ENCODE measurements at regions of chr1 and their contacts with region 1.

Region 1: GRCh38 chr1:35030756-35031446 is 844 bp downstream of the ZMYM6 start:
- DNase-seq: peak; percentile 58
- H3K4me3 Mint-ChIP-seq: peak overlapping the region; percentile 99
- H3K27ac Mint-ChIP-seq: peak overlapping the region; percentile 96
- H3K4me1 Mint-ChIP-seq: peaks cover 29% of the 10 kb centered on the region
- H3K27me3 Mint-ChIP-seq: no peaks in the 10 kb centered on the region

Region 2: DNA sequence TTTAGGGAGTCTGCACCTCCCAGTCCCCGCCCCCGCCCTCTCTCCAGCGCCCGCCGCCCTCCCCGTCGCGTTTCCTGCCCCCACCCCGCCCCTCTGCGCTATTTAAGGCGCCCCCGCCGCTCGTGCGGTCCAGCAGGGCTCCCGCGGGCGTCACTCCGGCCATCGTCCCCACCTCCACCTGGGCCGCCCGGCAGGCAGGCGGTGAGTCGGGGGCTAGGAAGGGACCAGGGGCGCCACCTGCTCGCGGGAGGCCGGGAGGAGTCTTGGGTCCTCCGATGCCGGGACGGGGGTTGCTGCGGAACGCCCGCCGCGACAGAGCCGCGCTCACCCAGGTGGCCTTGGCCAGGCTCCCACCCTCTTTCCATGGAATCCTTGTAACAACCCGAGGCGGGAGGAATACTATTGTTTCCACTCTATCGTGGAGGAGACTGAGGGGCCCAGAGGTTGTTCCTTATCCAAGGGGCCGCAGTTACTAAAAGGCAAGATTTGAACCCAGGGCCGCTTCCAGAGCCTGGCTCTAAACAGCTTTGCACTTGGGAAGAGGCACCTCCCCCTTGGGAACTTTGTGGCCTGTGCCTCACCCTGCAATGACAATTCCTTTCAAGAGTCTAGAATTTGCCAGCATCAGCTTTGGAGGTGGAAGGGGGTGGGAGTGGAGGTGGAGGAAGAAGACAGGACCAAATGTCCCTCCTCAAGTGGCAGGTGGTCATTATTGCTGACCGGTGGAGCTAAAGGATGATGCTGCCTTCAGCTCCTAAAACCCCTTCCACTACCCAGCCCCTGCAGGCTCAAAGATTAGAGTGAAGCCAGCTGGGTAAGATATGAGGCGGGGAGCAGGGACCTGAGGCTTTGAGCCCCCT is 237.8 kb before region 1 on chr1 and contains the start of gene GJA4:
- CTCF ChIA-PET with region 1: no interaction called
- POLR2A ChIA-PET with region 1: no interaction called
- intact Hi-C with region 1: no loop called
- DNase-seq: no peak
- H3K4me3 Mint-ChIP-seq: no peak within 1 kb of the TSS
- H3K27ac Mint-ChIP-seq: no peak within 1 kb of the TSS
- H3K4me1 Mint-ChIP-seq: peaks cover 18% of the 10 kb centered on the region
- H3K27me3 Mint-ChIP-seq: peaks cover 37% of the 10 kb centered on the region
- total RNA-seq, gene GJA4: not detected

Region 3: DNA sequence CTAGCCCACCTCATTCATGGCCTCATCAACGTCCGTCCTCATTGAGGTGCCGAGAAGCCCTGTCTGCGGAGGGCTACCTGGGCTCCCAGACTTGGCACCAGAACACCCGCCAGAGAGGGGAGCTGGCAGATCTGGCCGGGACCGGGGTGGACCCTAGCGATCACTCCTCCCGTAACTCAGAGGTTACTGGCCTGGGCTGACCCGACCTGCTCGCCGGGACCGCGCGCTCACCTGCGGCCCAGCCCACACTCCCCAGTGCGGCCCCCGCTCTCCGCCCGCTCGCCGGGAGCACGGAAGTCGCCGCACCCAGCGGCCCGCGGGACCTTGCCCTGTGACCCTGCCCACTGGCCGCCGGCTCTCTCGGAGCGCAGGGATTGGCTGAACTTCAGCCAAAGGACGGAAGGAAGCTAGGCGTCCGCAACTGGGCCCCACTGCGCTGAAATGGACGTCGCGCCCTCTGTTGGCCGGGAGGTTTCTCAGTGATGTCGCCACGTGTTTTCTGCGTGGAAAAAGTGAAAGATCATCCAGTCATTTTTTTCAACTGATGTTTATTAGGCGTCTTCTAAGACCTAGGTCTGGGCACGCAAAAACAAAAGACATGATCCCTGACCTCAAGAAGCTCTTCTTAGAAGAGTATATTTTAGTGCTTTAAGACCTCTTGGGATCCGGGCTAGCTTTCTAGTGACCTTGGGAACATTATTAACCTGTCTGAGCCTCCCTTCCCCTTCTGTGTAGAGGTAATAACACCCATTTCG is 171.3 kb before region 1 on chr1 and contains the start of gene SMIM12:
- CTCF ChIA-PET with region 1: no interaction called
- POLR2A ChIA-PET with region 1: interaction called, 5 read pairs
- intact Hi-C with region 1: loop called (anchors 5 kb)
- DNase-seq: peak; percentile 96
- H3K4me3 Mint-ChIP-seq: peak within 1 kb of the TSS; percentile 98
- H3K27ac Mint-ChIP-seq: peak within 1 kb of the TSS; percentile 98
- H3K4me1 Mint-ChIP-seq: peaks cover 42% of the 10 kb centered on the region
- H3K27me3 Mint-ChIP-seq: no peaks in the 10 kb centered on the region
- total RNA-seq, gene SMIM12: 46.5 to 46.7 TPM

Region 4: DNA sequence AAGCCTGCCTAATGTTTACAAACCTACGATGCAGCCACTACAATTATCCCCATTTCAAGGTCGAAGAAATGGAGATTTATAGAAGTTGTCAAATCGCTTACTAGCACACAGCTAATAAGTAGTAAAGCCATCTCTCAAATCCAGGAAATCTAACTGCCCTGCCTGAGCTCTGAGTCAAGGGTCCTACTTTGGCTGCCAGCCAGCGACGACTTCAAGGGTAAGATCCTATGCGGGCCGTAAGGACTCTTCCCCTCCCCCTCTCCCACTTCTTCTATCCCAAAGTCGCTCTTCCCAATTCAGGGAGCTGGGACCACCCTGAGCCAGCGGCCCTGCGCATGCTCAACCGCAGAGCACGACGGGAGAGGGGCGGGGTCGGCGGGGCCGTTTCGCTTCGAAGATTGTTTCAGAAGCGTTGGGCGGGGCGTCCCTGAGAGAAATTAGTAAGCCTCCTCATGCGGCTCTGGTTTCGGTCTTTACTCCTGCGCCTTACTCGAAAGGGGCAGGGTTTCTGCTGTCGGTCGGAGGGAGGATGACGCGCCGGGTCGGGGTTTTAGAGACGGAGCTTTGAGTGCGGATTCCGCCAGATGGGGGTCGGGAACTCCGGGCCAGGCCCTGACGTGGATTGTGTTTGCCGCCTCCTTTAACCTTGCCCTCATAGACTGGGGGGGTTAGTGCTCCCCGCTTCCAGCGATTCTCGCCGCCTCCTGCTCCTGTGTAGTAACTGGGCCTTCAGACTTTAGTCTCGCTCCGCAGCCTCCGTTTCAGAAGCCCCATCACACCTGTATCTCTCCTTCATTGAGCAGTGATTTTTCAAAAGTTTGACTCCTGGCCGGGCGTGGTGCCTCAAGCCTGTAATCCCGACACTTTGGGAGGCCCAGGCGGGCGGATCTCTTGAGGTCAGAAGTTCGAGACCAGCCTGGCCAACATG is 48.4 kb after region 1 on chr1 and contains the start of gene ZMYM1:
- CTCF ChIA-PET with region 1: interaction called, 3 read pairs
- POLR2A ChIA-PET with region 1: interaction called, 4 read pairs
- intact Hi-C with region 1: loop called (anchors 2 kb)
- DNase-seq: peak; percentile 95
- H3K4me3 Mint-ChIP-seq: peak within 1 kb of the TSS; percentile 94
- H3K27ac Mint-ChIP-seq: peak within 1 kb of the TSS; percentile 98
- H3K4me1 Mint-ChIP-seq: peaks cover 35% of the 10 kb centered on the region
- H3K27me3 Mint-ChIP-seq: no peaks in the 10 kb centered on the region
- total RNA-seq, gene ZMYM1: 3.6 to 3.9 TPM

Region 5: DNA sequence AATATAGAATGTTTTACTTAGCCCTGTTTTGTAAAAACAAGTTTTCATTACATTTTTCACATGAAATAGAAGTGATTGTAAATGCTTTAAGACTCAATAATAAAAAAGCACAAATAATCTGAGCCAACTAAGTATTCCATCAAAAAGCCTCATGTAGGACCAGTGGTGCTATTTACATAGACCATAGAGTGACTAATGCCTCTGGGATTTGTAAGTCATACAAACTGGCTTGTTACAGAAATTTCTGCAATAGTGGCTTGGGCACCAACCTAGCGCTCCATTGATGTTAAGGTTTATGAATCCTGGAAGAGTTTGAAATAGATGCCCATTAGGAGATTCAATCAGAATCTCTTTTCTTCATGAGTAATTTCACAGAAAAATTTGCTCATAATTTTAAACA is 80.2 kb after region 1 on chr1:
- CTCF ChIA-PET with region 1: no interaction called
- POLR2A ChIA-PET with region 1: no interaction called
- intact Hi-C with region 1: no loop called
- DNase-seq: no peak
- H3K4me3 Mint-ChIP-seq: no peak overlapping the region
- H3K27ac Mint-ChIP-seq: no peak overlapping the region
- H3K4me1 Mint-ChIP-seq: peaks cover 5% of the 10 kb centered on the region
- H3K27me3 Mint-ChIP-seq: no peaks in the 10 kb centered on the region

Region 6: DNA sequence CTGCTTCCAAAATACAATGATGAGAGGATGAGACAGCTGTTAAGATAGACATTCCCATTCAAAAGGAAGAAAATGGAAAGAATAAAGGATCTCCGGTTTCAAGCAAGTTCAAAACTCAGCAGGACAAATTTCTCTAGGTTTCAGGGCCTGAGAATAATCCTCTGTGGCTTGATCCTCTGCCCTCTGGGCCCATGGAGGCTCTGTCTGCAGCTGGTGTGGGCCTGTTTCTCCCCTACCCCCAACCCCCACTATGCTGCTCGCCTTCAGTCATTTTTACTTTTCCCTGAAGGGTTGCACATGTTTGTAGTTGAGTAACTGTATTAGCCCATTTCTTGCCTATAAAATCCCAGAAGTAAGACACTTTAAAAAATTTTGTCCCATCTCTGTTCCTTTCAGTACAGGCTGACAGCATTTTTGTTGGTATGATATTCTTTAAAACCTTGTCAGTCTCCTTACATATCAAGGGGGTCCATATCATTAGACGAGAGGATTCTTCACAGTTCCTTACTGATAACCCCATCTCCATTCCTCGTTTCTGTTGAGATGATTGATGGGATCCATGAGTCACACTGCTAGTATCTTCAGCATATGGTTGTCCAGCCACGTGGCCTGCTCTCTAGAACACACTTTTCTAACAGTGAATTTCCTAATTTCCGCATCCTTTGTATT is 248.1 kb after region 1 on chr1:
- CTCF ChIA-PET with region 1: no interaction called
- POLR2A ChIA-PET with region 1: no interaction called
- intact Hi-C with region 1: loop called (anchors 10 kb)
- DNase-seq: no peak
- H3K4me3 Mint-ChIP-seq: no peak overlapping the region
- H3K27ac Mint-ChIP-seq: no peak overlapping the region
- H3K4me1 Mint-ChIP-seq: peaks cover 2% of the 10 kb centered on the region
- H3K27me3 Mint-ChIP-seq: no peaks in the 10 kb centered on the region

Measured in activated CD4-positive, alpha-beta memory T cell treated with anti-CD3 and anti-CD28 coated beads for 36 hours (primary cell).